ENCODE measurements at regions of chr16 and their contacts with region 1.

Region 1: GRCh38 chr16:84504420-84505248 is at the start of gene MEAK7:
- DNase-seq: peak; percentile 99
- H3K4me3 ChIP-seq: peak within 1 kb of the TSS; percentile 69 to 96 (median 96)
- H3K27ac ChIP-seq: peak within 1 kb of the TSS; percentile 92
- H3K4me1 ChIP-seq: peaks cover 53% of the 10 kb centered on the region
- H3K27me3 ChIP-seq: no peaks in the 10 kb centered on the region
- CTCF ChIP-seq: peak in 1 of 2 donors; percentile 8
- total RNA-seq, gene MEAK7: 73.5 to 107 TPM

Region 2: DNA sequence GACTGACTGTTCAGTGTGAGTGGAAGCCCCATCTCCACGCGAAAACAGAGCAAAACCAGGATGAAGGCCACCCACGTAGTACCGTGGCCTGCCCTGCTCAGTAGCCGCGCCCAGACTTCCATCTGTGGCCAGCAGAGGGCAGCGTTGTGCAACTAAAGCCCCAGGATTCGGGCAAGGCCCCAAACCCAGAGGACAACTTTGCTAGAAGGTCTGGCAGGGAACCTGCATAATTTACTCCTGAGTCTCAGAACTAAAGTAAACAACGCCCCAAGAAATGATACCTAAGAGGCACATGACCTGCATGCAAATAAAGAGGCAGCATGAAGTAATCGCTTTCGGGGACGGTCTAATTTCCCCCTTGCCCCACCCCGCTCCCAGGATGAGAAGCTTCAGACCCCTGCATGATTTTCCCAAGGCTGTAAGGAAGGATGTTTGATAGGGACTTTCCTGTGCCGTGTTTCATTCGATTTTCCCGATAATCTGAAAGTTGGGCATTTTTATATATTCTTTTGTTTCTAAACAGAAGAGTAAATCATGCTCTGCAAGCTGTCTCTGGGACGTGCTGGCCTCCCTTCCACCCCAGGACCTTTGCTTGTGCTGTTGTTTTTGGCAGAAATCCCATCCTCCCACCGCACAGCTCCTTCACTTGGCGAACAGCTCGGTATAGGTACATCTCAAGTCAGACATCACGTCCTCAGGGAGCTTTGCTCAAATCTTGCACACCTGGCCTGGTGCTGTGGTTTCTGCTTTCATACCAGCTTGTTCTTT is 678.3 kb before region 1 on chr16:
- CTCF ChIA-PET with region 1: no interaction called
- dilution Hi-C with region 1: no loop called
- in situ Hi-C with region 1: no loop called
- intact Hi-C with region 1: loop called (anchors 10 kb)
- DNase-seq: peak; percentile 85
- H3K4me3 ChIP-seq: no peak overlapping the region
- H3K27ac ChIP-seq: no peak overlapping the region
- H3K4me1 ChIP-seq: peaks cover 5% of the 10 kb centered on the region
- H3K27me3 ChIP-seq: no peaks in the 10 kb centered on the region
- CTCF ChIP-seq: peak; percentile 89 to 90

Region 3: DNA sequence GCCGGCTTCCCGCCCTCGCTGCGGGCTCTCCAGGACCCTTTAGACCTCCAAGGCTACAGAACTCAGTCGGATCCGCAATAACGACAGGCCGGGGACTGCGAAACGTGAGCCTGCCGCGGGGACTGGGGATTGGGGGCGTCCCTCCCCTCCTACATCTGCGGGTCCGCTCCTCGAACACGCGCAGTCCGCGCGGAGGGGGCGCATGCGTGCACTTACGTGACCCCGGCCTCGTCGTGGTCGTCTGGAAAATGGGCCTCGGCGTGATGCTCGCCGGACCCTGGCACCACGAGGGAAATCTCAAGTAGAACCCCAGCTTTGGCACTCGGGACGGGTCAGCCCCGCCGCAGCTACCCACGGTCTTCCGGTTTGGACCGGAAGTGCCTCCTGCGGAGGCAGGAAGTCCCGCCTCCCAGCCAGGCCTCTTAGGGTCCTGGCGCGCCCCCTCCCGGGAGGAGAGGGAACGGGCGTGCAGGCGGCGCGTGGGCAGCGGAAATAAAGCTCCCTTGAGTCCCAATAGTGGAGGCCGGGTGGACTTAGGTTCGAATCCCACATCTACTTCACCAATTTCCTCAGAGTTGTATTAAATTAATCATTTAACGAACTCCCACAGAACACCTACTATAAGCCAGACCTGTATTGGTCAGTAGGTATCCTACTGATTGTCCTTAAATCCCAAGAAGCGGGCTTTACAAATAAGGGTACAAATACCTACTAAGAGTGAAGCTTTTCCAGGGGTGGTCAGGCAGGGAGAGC is 317.8 kb before region 1 on chr16 and contains the start of gene TAF1C:
- CTCF ChIA-PET with region 1: no interaction called
- dilution Hi-C with region 1: no loop called
- in situ Hi-C with region 1: no loop called
- intact Hi-C with region 1: loop called (anchors 10 kb)
- DNase-seq: peak; percentile 87
- H3K4me3 ChIP-seq: peak within 1 kb of the TSS; percentile 92 to 97 (median 97)
- H3K27ac ChIP-seq: peak within 1 kb of the TSS; percentile 51
- H3K4me1 ChIP-seq: peaks cover 3% of the 10 kb centered on the region
- H3K27me3 ChIP-seq: no peaks in the 10 kb centered on the region
- CTCF ChIP-seq: peak; percentile 81 to 98
- total RNA-seq, gene TAF1C: 15.3 to 30.1 TPM

Region 4: DNA sequence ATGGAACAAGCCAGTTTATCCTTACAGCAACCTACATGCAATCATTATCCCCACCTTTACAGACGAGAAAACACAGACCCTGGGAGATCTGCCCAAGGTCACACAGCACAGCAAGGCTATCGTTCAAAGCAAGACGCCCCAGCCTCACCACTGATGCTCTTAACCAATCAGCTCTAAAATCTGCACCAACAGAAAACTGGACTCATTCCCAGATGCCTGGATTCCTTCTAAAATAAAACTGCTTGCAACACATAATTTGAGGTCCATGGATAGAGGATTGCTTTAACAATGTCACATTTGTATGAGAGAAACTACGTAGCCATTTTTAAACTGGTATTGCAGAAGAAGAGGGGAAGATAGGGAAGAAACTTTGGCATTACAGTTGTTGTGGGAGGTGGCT is 106.4 kb after region 1 on chr16:
- CTCF ChIA-PET with region 1: no interaction called
- dilution Hi-C with region 1: loop called (anchors 5 kb)
- in situ Hi-C with region 1: no loop called
- intact Hi-C with region 1: no loop called
- DNase-seq: no peak
- H3K4me3 ChIP-seq: no peak overlapping the region
- H3K27ac ChIP-seq: no peak overlapping the region
- H3K4me1 ChIP-seq: peaks cover 20% of the 10 kb centered on the region
- H3K27me3 ChIP-seq: no peaks in the 10 kb centered on the region
- CTCF ChIP-seq: no peak

Region 5: GRCh38 chr16:84738255-84739038 is 233.8 kb after region 1 on chr16:
- CTCF ChIA-PET with region 1: no interaction called
- dilution Hi-C with region 1: loop called (anchors 5 kb)
- in situ Hi-C with region 1: no loop called
- intact Hi-C with region 1: no loop called
- DNase-seq: peak; percentile 72
- H3K4me3 ChIP-seq: no peak overlapping the region
- H3K27ac ChIP-seq: no peak overlapping the region
- H3K4me1 ChIP-seq: peaks cover 40% of the 10 kb centered on the region
- H3K27me3 ChIP-seq: no peaks in the 10 kb centered on the region
- CTCF ChIP-seq: peak; percentile 87 to 94

Measured in mammary epithelial cell (primary cell).